Activated naive CD4-positive, alpha-beta T cell treated with anti-CD3 and anti-CD28 coated beads for 36 hours (primary cell): ENCODE measurements at regions of chr3 and their contacts with region 1.

Region 1: DNA sequence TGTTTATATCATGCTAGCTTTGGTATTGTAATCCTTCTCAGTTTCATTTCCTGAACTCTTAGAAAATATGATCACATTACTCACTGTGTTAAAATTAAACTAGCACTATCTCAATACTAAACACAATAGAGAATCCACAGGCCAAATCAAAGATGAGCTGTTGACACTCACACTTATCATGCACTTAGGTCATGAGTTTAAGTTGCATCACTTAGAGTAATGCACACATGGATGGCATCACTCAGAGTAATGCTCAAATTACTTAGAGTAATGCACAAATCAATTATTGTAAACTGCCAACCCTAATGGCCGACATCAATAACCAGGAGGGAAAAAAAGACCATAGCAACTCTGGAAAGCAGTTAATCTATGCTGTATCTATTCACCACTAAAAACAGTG is 40.0 kb upstream of the MCF2L2 start:
- DNase-seq: no peak
- H3K4me3 Mint-ChIP-seq: no peak overlapping the region
- H3K27ac Mint-ChIP-seq: peak overlapping the region; percentile 87
- H3K4me1 Mint-ChIP-seq: peaks cover 27% of the 10 kb centered on the region
- H3K27me3 Mint-ChIP-seq: no peaks in the 10 kb centered on the region

Region 2: GRCh38 chr3:183349421-183350157 is 118.8 kb before region 1 on chr3:
- CTCF ChIA-PET with region 1: no interaction called
- intact Hi-C with region 1: no loop called
- DNase-seq: no peak
- H3K4me3 Mint-ChIP-seq: no peak overlapping the region
- H3K27ac Mint-ChIP-seq: no peak overlapping the region
- H3K4me1 Mint-ChIP-seq: peaks cover 21% of the 10 kb centered on the region
- H3K27me3 Mint-ChIP-seq: peaks cover 2% of the 10 kb centered on the region

Region 3: DNA sequence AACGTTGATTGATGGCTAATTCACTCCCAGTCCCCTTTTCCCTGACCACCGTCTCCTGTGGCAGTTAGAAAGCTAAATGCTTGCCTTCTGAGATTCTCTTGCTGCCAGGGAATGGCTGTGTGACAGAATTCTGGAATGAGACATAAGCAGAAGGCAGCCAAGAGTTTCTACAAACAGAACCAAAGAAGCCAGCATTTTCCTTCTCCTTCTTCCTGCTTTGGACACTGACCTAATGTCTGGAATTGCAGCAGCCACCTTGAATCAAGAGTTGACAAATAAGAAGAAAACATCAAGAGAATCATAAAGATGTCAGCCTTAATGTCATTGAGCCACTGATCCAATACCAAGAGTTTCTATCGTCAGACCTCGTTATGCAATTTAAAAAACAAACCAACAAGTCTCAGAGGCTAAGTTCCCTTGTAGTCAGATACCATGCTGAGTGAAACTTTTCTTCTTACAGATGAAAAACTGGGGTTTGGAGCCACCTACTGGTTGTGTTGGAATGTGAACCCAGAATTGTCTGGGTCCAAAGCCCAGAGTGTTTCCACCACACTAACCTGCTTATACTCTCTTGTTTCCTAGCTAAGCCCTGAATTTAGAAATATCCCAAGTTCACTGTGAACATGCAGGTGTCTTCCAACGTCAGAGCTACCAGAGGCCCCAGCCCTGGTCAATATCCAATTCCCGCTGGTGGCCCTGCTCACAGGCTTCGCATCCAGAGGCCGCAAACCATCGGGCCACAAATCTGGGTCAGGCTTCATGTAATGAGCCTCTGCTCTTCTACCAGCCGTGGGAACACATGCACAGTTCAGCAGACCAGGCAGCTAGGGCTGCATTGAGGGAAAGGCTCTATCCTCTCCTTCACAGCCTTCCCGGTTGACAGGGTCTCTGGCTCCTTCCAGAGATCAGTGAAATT is 82.5 kb before region 1 on chr3:
- CTCF ChIA-PET with region 1: interaction called, 7 read pairs
- intact Hi-C with region 1: loop called (anchors 2 kb)
- DNase-seq: peak; percentile 79
- H3K4me3 Mint-ChIP-seq: no peak overlapping the region
- H3K27ac Mint-ChIP-seq: no peak overlapping the region
- H3K4me1 Mint-ChIP-seq: peaks cover 9% of the 10 kb centered on the region
- H3K27me3 Mint-ChIP-seq: no peaks in the 10 kb centered on the region

Region 4: DNA sequence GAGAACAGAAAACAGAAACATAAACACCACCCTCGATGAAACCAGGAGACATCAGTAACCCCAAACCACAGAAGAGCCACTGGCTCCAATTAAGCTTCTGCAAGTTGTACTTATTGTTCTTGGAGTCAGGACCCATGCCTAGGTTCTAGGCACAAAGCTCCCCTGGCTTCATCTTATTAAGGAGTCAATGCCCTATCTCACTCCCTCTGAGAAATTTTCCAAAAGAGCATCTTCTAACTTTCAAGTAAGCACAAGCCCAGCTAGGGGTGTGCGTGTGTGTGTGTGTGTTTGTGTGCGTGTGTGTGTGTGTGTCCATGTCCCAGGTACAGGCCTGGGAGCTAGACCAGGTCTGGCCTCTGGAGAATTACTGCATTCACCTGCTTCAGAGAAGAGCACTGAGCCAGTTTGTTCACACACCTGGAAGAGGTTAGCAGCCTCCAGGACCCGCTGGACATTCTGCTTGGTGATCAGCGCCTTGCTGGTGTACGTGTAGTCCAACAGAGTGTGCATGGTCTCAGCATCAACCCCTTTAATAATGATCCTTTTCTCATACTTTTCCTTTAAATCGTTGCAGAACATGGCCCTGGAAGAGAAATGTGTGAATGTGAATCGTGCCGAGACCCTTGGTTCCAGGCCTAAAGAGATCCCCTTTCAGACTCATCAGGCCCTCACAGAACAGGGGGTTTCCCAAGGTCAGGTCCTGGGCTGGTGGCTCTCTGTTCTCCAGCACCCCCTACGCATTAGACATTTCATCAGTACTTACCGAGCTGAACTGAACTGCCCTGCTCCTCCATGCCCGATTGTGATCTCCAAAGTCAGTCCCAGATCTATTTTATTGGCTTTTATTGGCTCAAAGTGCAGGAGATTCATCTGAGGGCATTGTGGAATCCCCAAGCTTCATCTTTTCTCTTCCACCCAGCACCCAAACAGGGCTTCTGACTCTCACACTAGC is 59.3 kb after region 1 on chr3:
- CTCF ChIA-PET with region 1: no interaction called
- intact Hi-C with region 1: loop called (anchors 1 kb)
- DNase-seq: peak; percentile 34
- H3K4me3 Mint-ChIP-seq: peak overlapping the region; percentile 16
- H3K27ac Mint-ChIP-seq: peak overlapping the region; percentile 85
- H3K4me1 Mint-ChIP-seq: peaks cover 56% of the 10 kb centered on the region
- H3K27me3 Mint-ChIP-seq: no peaks in the 10 kb centered on the region

Region 5: DNA sequence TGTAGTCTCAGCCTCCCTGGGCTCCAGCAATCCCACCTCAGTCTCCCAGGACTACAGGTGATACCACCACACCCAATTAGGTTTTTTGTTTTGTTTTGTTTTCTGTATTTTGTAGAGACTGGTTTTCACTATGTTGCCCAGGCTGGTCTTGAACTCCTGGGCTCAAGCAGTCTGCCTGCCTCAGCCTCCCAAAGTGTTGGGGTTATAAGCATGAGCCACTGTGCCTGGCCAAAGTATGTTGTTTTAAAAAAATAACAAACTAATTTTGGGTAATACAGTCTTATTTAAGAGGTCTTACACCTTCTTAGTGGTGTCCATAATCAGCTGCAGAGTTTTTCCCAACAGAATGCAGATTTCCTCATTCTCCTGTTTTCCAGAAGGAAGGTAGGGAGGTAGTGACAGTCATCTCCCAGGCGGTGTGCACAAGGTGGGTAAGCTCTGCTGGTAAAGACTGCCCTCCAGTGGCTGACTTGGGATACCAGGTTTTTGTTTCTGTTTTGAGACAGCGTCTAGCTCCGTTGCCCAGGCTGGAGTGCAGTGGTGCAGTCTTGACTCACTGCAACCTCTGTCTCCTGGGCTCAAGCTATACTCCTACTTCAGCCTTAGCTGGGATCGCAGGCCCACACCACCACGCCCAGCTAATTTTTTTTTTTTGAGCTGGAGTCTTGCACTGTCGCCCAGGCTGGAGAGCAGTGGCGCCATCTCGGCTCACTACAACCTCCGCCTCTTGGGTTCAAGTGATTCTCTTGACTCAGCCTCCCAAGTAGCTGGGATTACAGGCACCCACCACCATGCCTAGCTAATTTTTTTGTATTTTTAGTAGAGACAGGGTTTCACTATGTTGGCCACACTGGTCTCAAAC is 298.6 kb after region 1 on chr3:
- CTCF ChIA-PET with region 1: interaction called, 16 read pairs
- intact Hi-C with region 1: loop called (anchors 1 kb)
- DNase-seq: peak; percentile 89
- H3K4me3 Mint-ChIP-seq: no peak overlapping the region
- H3K27ac Mint-ChIP-seq: no peak overlapping the region
- H3K4me1 Mint-ChIP-seq: peaks cover 11% of the 10 kb centered on the region
- H3K27me3 Mint-ChIP-seq: no peaks in the 10 kb centered on the region

Region 6: DNA sequence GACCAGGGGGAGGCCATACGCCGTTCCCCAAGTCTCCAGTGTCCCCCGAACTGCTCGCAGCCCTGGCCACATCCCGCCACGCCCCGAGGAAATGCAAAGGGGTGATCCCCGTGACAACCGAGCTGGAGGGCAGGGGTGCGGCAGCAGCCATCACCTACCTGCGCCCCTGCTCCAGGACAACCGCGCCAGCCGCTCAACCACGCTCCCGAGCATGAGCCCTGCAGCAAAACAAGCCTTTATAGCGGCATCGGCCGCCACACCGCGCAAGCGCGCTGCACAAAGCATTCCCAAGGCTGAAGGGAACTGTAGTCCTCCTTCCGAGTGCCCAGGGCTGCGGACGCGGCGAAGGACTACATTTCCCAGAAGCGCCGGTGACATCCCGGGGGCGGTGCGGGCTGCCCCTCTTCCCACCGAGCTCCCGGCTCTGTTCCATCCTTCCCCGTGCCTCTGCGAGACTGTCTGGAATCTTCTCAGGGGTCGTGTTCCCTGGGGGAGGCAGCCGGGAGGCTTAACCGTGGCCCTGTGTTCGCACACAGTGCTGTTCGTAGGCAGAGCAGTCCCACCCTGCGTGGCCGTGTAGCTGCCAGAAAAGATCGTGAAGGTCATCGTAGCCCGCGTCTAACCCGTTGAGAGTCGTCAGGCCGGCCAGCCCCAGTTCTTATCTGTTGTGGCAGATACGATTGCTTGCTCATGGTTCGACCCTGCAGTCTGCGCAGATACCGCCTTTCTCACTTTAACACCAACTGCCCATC is 549.4 kb after region 1 on chr3 and contains the start of gene ABCC5:
- CTCF ChIA-PET with region 1: no interaction called
- intact Hi-C with region 1: loop called (anchors 1 kb)
- DNase-seq: peak; percentile 88
- H3K4me3 Mint-ChIP-seq: peak within 1 kb of the TSS; percentile 98
- H3K27ac Mint-ChIP-seq: peak within 1 kb of the TSS; percentile 77
- H3K4me1 Mint-ChIP-seq: peaks cover 16% of the 10 kb centered on the region
- H3K27me3 Mint-ChIP-seq: no peaks in the 10 kb centered on the region
- total RNA-seq, gene ABCC5: 11.2 to 12.0 TPM